Breast epithelium (tissue), 4 donors: ENCODE measurements at regions of chr14 and their contacts with region 1.

Region 1: GRCh38 chr14:36827861-36828260 is 166.2 kb downstream of the PAX9 start:
- DNase-seq: no peak
- H3K4me3 ChIP-seq: no peak overlapping the region
- H3K27ac ChIP-seq: no peak overlapping the region
- H3K4me1 ChIP-seq: no peaks in the 10 kb centered on the region
- H3K27me3 ChIP-seq: no peaks in the 10 kb centered on the region
- CTCF ChIP-seq: no peak
- POLR2A ChIP-seq: no peak

Region 2: GRCh38 chr14:36797634-36798033 is 30.2 kb before region 1 on chr14:
- intact Hi-C with region 1: loop called (anchors 2 kb)
- DNase-seq: no peak
- H3K4me3 ChIP-seq: no peak overlapping the region
- H3K27ac ChIP-seq: no peak overlapping the region
- H3K4me1 ChIP-seq: no peaks in the 10 kb centered on the region
- H3K27me3 ChIP-seq: no peaks in the 10 kb centered on the region
- CTCF ChIP-seq: no peak
- POLR2A ChIP-seq: no peak

Region 3: GRCh38 chr14:36807727-36808126 is 20.1 kb before region 1 on chr14:
- intact Hi-C with region 1: no loop called
- DNase-seq: no peak
- H3K4me3 ChIP-seq: no peak overlapping the region
- H3K27ac ChIP-seq: no peak overlapping the region
- H3K4me1 ChIP-seq: no peaks in the 10 kb centered on the region
- H3K27me3 ChIP-seq: no peaks in the 10 kb centered on the region
- CTCF ChIP-seq: no peak
- POLR2A ChIP-seq: no peak